ENCODE measurements at regions of chr9 and their contacts with region 1.

Region 1: DNA sequence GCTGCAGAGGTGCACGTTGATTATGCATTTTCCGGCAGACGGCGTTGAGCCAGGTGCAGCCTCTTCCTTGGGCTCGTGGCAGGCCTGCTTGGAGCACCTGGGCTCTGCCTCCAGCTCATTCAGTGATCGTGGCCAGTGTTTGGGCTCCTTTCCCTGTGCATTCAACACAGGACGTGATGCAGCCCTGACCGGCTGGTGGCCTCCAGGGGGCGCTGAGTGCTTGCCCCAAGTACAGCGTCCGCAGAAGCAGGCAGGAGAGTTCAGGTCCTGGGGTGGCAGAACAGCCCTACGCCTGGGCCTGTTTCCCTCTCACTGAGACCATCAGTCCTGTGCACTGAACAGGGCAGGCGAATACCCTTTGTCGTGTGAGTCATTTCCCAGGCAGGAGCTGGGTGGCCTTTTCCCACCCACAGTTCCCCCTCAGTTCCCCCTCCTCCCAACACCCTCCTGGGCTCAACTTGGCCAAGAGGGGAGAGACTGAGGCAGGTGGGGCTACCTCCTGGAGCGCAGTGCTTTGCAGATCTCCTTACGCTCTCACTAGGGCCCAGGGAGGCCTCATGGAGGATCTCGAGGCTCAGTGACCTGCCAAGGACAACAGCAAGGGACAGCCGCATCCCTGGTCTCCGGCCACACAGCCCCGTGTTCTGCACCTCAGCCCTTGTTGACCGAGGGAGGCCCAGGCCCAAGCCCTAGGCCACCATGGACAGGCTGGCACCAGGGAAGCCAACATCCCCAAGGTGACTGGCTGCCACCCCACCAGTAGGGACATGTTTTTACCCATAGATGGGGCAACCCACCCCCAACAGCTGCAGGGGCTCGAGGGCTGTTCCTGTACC is 52.9 kb downstream of the LRSAM1 start:
- DNase-seq: peak; percentile 82 to 91 (median 88)
- ATAC-seq: peak; percentile 75 to 86 (median 79)
- H3K4me3 ChIP-seq: no peak overlapping the region
- H3K27ac ChIP-seq: peak overlapping the region in 3 of 12 donors; percentile 17 to 24 (median 19)
- H3K4me1 ChIP-seq: peaks cover 0 to 3% (median under 1%) of the 10 kb centered on the region in 12 donors
- H3K27me3 ChIP-seq: no peaks in the 10 kb centered on the region
- CTCF ChIP-seq: peak; percentile 84 to 94 (median 90)
- POLR2A ChIP-seq: peak in 1 of 2 donors; percentile 15

Region 2: DNA sequence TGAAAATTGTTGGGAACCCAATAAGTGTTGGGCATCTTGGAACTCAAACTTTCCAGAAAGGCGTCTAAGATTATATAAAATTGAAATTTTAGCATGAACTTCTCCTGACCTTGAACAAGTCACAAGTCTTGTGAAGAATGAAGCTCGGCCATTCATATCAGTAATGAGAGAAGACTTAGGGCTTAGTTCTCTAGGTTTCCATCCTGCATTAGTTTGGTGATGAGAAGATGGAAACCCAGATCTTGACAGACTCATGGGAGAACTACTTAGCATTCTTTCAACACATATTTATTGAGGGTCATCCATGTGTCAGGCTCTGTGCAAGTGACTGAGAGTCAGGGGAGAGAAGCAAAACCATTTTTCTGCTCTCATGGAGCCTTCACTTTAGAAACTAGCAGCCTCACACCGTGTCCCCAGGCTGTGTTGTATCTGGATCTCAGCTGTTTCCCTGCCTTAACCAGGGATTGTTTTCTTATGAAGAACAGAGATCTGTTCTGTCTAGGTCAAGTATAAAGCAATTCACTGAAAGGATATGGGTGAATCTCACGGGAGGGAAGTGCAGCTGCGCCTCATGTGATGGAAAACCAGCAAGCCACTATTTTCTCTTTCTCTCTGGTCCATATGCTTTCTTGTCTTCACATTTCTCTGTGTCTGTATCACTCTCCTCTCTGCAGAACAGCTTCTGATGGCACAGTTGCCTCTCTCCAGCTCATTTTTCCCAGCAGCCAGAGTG is 236.2 kb before region 1 on chr9:
- intact Hi-C with region 1: no loop called
- DNase-seq: no peak
- ATAC-seq: no peak
- H3K4me3 ChIP-seq: no peak overlapping the region
- H3K27ac ChIP-seq: peak overlapping the region in 8 of 12 donors; percentile 1 to 63 (median 46)
- H3K4me1 ChIP-seq: peaks cover 0 to 34% (median 3%) of the 10 kb centered on the region in 12 donors
- H3K27me3 ChIP-seq: no peaks in the 10 kb centered on the region
- CTCF ChIP-seq: no peak
- POLR2A ChIP-seq: no peak

Region 3: DNA sequence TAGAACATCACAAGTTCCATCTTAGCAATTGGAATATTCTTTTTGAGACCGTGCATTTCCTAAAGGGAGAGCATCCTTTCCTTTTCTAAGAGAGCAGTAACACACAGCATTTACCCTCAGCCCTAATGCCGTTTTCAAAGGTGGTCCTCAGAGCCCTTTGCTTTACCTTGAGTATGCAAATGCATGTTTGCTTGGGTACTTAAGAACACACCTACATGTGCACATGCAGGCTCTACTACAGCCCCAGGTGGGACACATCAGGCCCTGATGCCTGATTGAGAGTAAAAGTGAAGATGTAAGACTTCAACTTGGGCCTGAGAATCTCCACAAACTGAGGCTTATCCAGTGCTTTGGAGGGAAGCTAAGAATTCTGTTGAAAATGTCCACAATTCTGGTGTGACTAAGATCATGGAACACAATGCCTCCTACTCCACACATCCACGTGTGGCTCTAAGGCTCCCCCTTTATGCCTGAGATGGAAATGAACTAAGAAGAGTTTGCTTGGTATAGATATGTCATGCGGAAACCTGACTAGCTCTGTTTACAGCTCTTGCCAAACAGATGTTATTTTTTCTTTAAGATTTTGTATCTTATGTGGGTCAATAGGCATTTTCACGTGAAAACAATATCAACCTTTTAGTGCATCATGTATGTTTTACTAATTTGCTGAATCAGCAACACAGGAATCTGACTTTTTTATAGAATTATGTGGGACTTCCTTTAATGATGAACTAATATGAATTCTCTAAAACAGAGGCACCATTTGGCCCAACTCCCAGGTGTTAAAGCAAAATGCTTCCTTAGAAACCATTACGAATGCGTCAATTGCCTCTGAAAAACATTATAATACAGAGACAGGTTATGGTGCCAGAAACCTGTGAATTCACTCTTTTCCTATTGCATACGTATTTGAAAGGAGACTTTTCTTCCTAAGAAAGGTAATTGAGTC is 156.1 kb before region 1 on chr9:
- intact Hi-C with region 1: no loop called
- DNase-seq: no peak
- ATAC-seq: peak in 3 of 4 donors; percentile 59 to 75 (median 73)
- H3K4me3 ChIP-seq: no peak overlapping the region
- H3K27ac ChIP-seq: peak overlapping the region in 6 of 12 donors; percentile 10 to 47 (median 30)
- H3K4me1 ChIP-seq: peaks cover 0 to 49% (median 11%) of the 10 kb centered on the region in 12 donors
- H3K27me3 ChIP-seq: no peaks in the 10 kb centered on the region
- CTCF ChIP-seq: peak; percentile 27 to 66 (median 50)
- POLR2A ChIP-seq: no peak

Region 4: GRCh38 chr9:127537792-127538191 is 33.6 kb after region 1 on chr9:
- intact Hi-C with region 1: loop called in 1 of 10 experiments (anchors 5 kb)
- DNase-seq: peak in 1 of 5 donors; percentile 21
- ATAC-seq: no peak
- H3K4me3 ChIP-seq: no peak overlapping the region
- H3K27ac ChIP-seq: peak overlapping the region in 3 of 12 donors; percentile 5 to 80 (median 49)
- H3K4me1 ChIP-seq: peaks cover 3 to 81% (median 55%) of the 10 kb centered on the region in 12 donors
- H3K27me3 ChIP-seq: no peaks in the 10 kb centered on the region
- CTCF ChIP-seq: peak in 9 of 12 donors; percentile 7 to 42 (median 26)
- POLR2A ChIP-seq: no peak

Region 5: DNA sequence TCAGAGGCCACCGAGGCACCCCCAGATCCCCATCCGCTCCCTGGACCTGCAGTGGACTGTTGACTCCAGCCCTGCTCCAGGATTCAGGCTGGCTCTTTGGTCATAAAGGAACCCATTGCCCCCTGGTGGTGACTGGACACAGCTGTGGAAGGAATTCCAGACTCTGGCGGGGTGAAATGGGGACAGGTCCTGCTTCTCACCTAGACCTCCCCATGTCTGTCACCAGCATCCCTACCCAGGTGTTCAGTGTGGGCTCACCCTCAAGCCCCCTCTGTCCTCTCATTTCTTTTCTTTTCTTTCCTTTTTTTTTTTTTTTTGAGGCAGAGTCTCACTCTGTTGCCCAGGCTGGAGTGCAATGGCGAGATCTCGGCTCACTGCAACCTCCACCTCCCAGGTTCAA is 82.4 kb after region 1 on chr9:
- intact Hi-C with region 1: loop called (anchors 1 to 2 kb)
- DNase-seq: peak; percentile 81 to 90 (median 83)
- ATAC-seq: peak; percentile 82 to 94 (median 92)
- H3K4me3 ChIP-seq: no peak overlapping the region
- H3K27ac ChIP-seq: no peak overlapping the region
- H3K4me1 ChIP-seq: peaks cover 0 to 6% (median 0%) of the 10 kb centered on the region in 12 donors
- H3K27me3 ChIP-seq: no peaks in the 10 kb centered on the region
- CTCF ChIP-seq: peak; percentile 80 to 91 (median 86)
- POLR2A ChIP-seq: no peak

Region 6: DNA sequence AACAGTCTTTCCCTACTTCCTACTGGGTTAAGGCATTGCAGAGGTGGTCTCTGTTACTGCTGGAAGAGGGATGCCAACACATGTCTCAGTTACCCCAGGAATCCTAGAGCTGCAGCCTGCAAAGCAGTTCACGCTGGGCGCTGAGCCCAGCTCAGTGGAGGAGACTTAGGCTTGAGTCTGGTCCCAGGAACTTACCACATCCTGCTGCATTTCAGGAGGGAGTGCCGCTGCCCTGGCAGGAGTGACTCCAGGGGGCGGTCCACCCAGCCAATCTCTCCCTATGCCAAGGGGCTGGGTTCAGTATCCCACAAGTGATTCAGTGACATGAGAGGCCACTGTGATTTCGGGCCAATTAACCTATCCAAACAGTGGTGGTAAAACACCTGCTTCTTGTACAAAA is 219.3 kb after region 1 on chr9:
- intact Hi-C with region 1: loop called in 2 of 10 experiments (anchors 5 to 10 kb)
- DNase-seq: no peak
- ATAC-seq: peak in 1 of 4 donors; percentile 10
- H3K4me3 ChIP-seq: no peak overlapping the region
- H3K27ac ChIP-seq: no peak overlapping the region
- H3K4me1 ChIP-seq: peaks cover 0 to 12% (median 7%) of the 10 kb centered on the region in 12 donors
- H3K27me3 ChIP-seq: no peaks in the 10 kb centered on the region
- CTCF ChIP-seq: no peak
- POLR2A ChIP-seq: no peak

Measured in heart left ventricle (tissue), 16 donors.